ENCODE measurements at regions of chr7 and their contacts with region 1.

Region 1: DNA sequence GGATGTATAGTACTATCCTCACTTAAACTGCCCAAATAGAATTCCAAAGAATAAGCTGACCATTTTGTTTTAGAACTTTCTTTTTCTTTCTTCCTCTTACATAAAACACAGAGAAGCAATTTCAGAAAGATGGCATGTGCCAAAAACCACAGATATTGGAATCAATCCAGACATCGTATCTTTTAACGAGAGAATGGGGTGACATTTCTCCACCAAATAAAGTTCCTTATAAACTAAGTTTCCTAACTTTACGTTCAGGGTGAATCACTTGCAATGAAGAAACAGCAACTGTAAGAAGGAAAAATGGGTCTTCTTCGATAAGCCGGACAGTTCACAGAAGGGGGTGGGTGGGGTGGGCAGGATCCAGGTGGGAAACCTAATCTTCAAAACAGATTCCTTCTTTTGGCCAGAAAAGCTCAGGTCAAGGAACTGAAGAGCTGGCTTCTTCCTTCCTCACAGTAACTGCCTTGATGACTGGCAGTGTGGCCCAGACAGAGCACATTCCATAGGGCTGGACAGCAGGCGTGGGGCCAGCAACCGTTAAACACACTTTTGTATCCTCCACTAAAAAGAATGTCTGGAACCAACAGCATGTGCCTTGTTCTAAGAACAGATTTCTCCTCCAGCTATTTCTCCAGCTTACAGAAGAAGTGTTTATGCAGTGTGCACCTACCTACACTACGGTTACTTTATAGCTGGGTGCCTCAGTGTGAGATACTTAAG is 31.5 kb downstream of the CREB3L2 start:
- DNase-seq: peak; percentile 85
- ATAC-seq: peak; percentile 80
- H3K4me3 ChIP-seq: no peak overlapping the region
- H3K27ac ChIP-seq: peak overlapping the region; percentile 51
- H3K4me1 ChIP-seq: peaks cover 23% of the 10 kb centered on the region
- H3K27me3 ChIP-seq: no peaks in the 10 kb centered on the region
- CTCF ChIP-seq: no peak
- POLR2A ChIP-seq: no peak
- RAD21 ChIP-seq: peak; percentile 9; the same call in 1 of the 2 replicates

Region 2: GRCh38 chr7:137953665-137954470 is 16.5 kb before region 1 on chr7:
- CTCF ChIA-PET with region 1: interaction called, 4 read pairs
- POLR2A ChIA-PET with region 1: no interaction called
- dilution Hi-C with region 1: no loop called
- in situ Hi-C with region 1: no loop called
- intact Hi-C with region 1: loop called (anchors 2 kb)
- DNase-seq: peak; percentile 84
- ATAC-seq: peak; percentile 38
- H3K4me3 ChIP-seq: no peak overlapping the region
- H3K27ac ChIP-seq: no peak overlapping the region
- H3K4me1 ChIP-seq: peaks cover 24% of the 10 kb centered on the region
- H3K27me3 ChIP-seq: no peaks in the 10 kb centered on the region
- CTCF ChIP-seq: no peak
- POLR2A ChIP-seq: peak; percentile 67; the same call in 1 of the 2 replicates
- RAD21 ChIP-seq: no peak

Measured in IMR-90 (cell line).